HEK293 (cell line): ENCODE measurements at regions of chr2 and their contacts with region 1.

Region 1: GRCh38 chr2:218852911-218853667 is 6.5 kb upstream of the WNT6 start:
- H3K4me3 ChIP-seq: no peak overlapping the region
- H3K27ac ChIP-seq: no peak overlapping the region
- H3K4me1 ChIP-seq: peaks cover 18% of the 10 kb centered on the region
- CTCF ChIP-seq: peak; percentile 92

Region 2: DNA sequence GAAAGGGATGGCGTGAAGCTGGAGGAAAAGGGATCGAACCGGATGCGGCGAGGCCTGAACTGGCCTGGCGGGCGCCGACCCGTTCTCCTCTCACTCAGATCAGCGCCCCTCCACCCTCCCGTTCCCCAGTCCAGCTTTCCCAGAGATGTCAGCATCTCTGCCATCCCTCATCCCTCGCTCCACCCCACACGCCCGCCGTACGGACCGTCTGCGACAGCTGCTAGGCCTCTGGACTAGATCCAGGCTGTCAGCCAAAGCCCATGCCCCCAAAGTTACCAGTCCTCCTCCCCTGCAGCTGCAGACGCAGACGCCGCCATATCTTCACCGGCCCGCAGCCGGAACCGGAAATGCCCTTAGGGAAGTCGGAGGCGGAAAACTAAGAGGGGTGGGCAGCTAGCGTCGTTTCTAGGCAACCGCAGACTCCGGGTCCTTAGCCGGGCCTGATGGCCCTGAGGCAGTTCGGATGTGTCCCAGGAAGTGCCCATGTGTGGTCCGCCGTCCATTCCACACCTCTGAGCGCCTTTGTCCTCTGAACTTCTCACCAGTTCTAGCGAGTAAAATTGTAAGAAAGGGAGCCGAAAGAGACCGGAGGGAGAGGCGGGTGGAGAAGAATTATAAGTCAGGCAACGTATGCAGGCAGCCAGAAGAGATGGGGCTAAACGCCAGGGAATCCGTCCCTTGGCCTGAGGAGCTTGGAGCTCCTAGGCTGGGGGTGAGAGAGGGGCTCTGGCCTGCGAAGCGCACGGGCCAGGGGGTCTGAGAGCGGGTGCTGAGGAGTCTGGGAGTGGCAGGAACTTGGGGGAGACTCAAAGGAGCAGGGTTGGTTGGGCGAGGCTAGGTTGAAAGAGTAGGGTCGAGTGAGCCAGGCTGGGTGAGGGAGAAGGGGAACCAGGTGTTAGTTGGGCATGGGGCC is 181.2 kb before region 1 on chr2 and contains the starts of genes RNF25 and STK36:
- CTCF ChIA-PET with region 1: interaction called, 19 read pairs
- POLR2A ChIA-PET with region 1: no interaction called
- H3K4me3 ChIP-seq: peak within 1 kb of the TSS; percentile 94
- H3K27ac ChIP-seq: peak within 1 kb of the TSS; percentile 54
- H3K4me1 ChIP-seq: no peaks in the 10 kb centered on the region
- CTCF ChIP-seq: peak; percentile 38; the same call in 1 of the 2 replicates

Region 3: GRCh38 chr2:218710687-218711549 is 142.2 kb before region 1 on chr2 and contains the start of gene TTLL4:
- CTCF ChIA-PET with region 1: interaction called, 19 read pairs
- POLR2A ChIA-PET with region 1: interaction called, 3 read pairs
- H3K4me3 ChIP-seq: peak within 1 kb of the TSS; percentile 99
- H3K27ac ChIP-seq: peak within 1 kb of the TSS; percentile 83
- H3K4me1 ChIP-seq: peaks cover 3% of the 10 kb centered on the region
- CTCF ChIP-seq: peak; percentile 99

Region 4: GRCh38 chr2:218733171-218734021 is 119.7 kb before region 1 on chr2:
- CTCF ChIA-PET with region 1: interaction called, 24 read pairs
- POLR2A ChIA-PET with region 1: interaction called, 4 read pairs
- H3K4me3 ChIP-seq: no peak overlapping the region
- H3K27ac ChIP-seq: no peak overlapping the region
- H3K4me1 ChIP-seq: peaks cover 6% of the 10 kb centered on the region
- CTCF ChIP-seq: no peak

Region 5: DNA sequence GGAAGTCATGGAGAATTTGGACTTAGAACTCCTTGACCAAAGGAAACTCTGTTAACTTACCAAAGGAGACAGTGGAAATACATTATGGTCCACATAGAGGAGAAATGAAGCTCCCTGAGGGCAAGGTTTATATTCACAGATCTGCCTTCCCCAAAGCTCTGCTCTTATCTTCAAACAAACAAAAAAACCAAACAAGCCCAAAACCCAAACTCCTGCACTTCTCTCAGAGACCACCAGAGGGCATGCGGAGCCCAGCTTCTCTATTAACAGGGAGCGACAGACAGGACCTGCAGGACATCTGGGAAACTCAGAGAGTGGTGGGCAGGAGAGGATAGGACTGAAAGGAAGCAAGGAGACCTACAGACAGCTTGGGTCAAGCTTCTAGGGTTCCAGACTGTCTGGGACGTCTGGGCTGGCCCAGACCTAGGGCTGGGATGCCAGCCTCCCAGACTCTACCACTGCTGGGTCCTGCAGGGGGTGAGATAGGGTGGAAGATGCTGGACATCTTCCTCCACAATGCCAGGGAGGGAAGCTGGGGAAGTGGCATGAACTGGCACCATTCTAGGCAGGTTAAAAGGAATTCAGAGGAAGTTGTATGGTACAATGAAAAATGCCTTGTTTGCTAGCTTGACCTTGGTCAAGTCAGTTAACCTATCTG is 23.6 kb after region 1 on chr2:
- CTCF ChIA-PET with region 1: interaction called, 71 read pairs
- POLR2A ChIA-PET with region 1: no interaction called
- H3K4me3 ChIP-seq: no peak overlapping the region
- H3K27ac ChIP-seq: no peak overlapping the region
- H3K4me1 ChIP-seq: no peaks in the 10 kb centered on the region
- CTCF ChIP-seq: peak; percentile 84